ENCODE measurements at regions of chr6 and their contacts with region 1.

Region 1: GRCh38 chr6:56851541-56852259 is 103.2 kb upstream of the BEND6 start:
- DNase-seq: peak in 3 of 5 donors; percentile 48 to 61 (median 53)
- ATAC-seq: peak; percentile 77 to 92 (median 88)
- H3K4me3 ChIP-seq: peak overlapping the region in 11 of 12 donors; percentile 26 to 75 (median 56)
- H3K27ac ChIP-seq: peak overlapping the region in 11 of 12 donors; percentile 24 to 74 (median 45)
- H3K4me1 ChIP-seq: peaks cover 0 to 39% (median 24%) of the 10 kb centered on the region in 12 donors
- H3K27me3 ChIP-seq: no peaks in the 10 kb centered on the region
- CTCF ChIP-seq: peak; percentile 42 to 76 (median 68)
- POLR2A ChIP-seq: no peak

Region 2: DNA sequence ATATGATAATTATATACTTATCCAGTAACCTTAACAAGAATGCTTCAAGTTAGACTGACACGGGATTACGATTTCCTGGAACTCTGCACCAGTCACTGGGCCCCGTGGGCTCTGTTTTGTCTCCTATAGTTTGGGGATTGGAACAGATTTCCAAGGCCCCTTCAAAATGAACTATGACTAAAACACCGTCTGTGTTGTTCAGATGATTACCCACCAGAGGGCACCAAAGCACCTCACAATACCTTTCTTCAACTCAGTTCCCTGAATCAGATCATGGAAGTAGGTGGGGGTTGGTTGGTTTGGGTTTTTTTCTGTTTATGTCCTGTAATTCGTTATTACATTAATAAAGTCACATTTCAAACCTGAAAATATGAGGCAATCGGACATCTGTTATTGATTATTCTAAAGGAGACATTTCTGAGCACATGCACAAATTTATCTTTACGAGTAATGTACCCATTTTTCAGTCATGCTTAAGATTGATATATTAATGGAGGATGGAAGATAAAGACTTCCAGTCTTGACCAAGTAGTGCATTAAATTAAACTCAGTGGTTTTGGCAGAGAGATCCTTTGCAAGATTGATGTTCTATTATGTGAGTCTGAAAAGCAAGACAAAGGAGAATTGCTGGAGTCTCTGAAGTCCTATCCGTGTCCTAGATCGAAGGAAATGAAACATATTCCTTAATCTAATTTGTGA is 492.4 kb before region 1 on chr6:
- intact Hi-C with region 1: loop called in 5 of 10 experiments (anchors 10 kb)
- DNase-seq: peak in 4 of 5 donors; percentile 36 to 60 (median 56)
- ATAC-seq: peak; percentile 34 to 80 (median 70)
- H3K4me3 ChIP-seq: no peak overlapping the region
- H3K27ac ChIP-seq: no peak overlapping the region
- H3K4me1 ChIP-seq: peaks cover 0 to 11% (median 1%) of the 10 kb centered on the region in 12 donors
- H3K27me3 ChIP-seq: no peaks in the 10 kb centered on the region
- CTCF ChIP-seq: peak; percentile 71 to 94 (median 82)
- POLR2A ChIP-seq: no peak

Region 3: GRCh38 chr6:56637640-56638039 is 214.1 kb before region 1 on chr6:
- intact Hi-C with region 1: loop called (anchors 1 to 5 kb)
- DNase-seq: no peak
- ATAC-seq: peak; percentile 44 to 72 (median 60)
- H3K4me3 ChIP-seq: no peak overlapping the region
- H3K27ac ChIP-seq: peak overlapping the region in 3 of 12 donors; percentile 6 to 30 (median 8)
- H3K4me1 ChIP-seq: peaks cover 0 to 12% (median 1%) of the 10 kb centered on the region in 12 donors
- H3K27me3 ChIP-seq: no peaks in the 10 kb centered on the region
- CTCF ChIP-seq: peak; percentile 49 to 87 (median 72)
- POLR2A ChIP-seq: no peak

Region 4: GRCh38 chr6:56708810-56709597 is 142.7 kb before region 1 on chr6:
- intact Hi-C with region 1: loop called (anchors 1 to 5 kb)
- DNase-seq: no peak
- ATAC-seq: peak in 2 of 4 donors; percentile 25 to 31
- H3K4me3 ChIP-seq: no peak overlapping the region
- H3K27ac ChIP-seq: peak overlapping the region in 11 of 12 donors; percentile 9 to 72 (median 49)
- H3K4me1 ChIP-seq: peaks cover 0 to 48% (median 25%) of the 10 kb centered on the region in 12 donors
- H3K27me3 ChIP-seq: no peaks in the 10 kb centered on the region
- CTCF ChIP-seq: peak; percentile 60 to 77 (median 72)
- POLR2A ChIP-seq: no peak

Region 5: DNA sequence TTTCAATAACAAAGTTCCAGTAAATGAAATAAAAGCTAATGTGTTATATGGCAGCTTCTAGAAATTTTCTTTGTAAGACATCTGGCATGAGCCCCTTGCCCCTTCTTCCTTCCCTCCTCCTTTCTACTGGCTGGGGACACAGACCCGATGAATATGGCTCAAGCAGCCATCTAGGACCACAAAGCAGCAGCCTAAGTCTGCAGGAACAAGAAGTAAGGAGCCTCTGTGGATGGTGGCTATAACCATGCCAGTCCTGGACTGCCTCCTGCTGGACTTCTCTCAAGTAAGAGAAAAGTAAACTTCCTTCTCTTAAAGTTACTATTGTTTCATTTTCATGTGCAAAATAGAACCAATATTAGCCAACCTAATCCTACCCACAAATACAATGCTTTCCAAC is 94.1 kb before region 1 on chr6:
- intact Hi-C with region 1: loop called in 1 of 10 experiments (anchors 5 kb)
- DNase-seq: no peak
- ATAC-seq: peak; percentile 37 to 63 (median 50)
- H3K4me3 ChIP-seq: no peak overlapping the region
- H3K27ac ChIP-seq: peak overlapping the region in 2 of 12 donors; percentile 24 to 55
- H3K4me1 ChIP-seq: peaks cover 0 to 63% (median 51%) of the 10 kb centered on the region in 12 donors
- H3K27me3 ChIP-seq: no peaks in the 10 kb centered on the region
- CTCF ChIP-seq: peak in 10 of 12 donors; percentile 30 to 54 (median 40)
- POLR2A ChIP-seq: no peak

Region 6: DNA sequence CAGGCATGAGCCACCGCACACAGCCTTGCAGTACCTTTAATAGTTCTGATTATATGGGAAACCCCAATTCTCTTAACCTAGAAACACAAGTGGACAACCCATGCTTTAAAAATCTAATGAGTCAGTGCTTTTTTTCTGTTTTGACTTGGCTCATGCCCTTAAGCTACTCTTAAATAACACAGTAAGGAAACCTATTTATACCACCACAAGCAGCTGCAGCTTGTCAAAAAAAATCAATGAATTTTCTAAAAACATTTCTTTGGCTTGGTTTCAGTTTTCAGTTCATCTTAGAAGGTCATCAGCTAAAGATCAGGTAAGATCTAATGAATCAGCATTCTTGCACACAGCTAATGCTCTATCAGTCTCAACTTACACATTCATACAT is 84.9 kb before region 1 on chr6:
- intact Hi-C with region 1: loop called in 2 of 10 experiments (anchors 5 kb)
- DNase-seq: no peak
- ATAC-seq: no peak
- H3K4me3 ChIP-seq: no peak overlapping the region
- H3K27ac ChIP-seq: peak overlapping the region in 2 of 12 donors; percentile 12 to 22
- H3K4me1 ChIP-seq: peaks cover 0 to 85% (median 59%) of the 10 kb centered on the region in 12 donors
- H3K27me3 ChIP-seq: no peaks in the 10 kb centered on the region
- CTCF ChIP-seq: no peak
- POLR2A ChIP-seq: no peak

Measured in heart left ventricle (tissue), 16 donors.